ENCODE measurements at regions of chr13 and their contacts with region 1.

Region 1: DNA sequence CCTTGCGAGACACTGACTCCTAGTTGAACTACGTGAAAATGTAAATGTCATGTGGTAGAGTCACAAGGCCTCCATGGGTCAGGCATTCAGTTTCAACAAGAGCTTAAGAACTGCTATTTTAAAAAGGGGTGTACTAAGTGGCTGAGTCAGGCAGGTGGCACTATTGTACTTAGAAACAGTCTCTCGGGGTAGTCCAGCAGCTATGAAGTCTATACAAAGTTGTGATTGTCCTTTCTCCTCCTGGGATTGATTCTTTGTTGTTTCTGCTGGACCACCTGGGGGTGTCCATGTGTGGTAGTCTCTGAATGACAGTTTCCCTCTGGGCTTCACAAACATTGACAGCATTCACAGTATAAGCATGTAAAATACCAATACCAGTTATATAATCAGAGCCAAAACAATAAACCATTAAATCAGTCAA is 33.0 kb downstream of the UGGT2 start:
- DNase-seq: peak in 4 of 10 donors; percentile 21 to 61 (median 34)

Region 2: GRCh38 chr13:96817336-96817941 is 797.3 kb after region 1 on chr13:
- intact Hi-C with region 1: loop called (anchors 10 kb)
- DNase-seq: no peak

Region 3: GRCh38 chr13:96958286-96958891 is 938.2 kb after region 1 on chr13:
- intact Hi-C with region 1: loop called (anchors 5 kb)
- DNase-seq: peak in 1 of 10 donors; percentile 11

Region 4: GRCh38 chr13:97026531-97027161 is 1006.5 kb after region 1 on chr13:
- intact Hi-C with region 1: loop called (anchors 5 kb)
- DNase-seq: no peak